BJ (cell line): ENCODE measurements at regions of chr7 and their contacts with region 1.

Region 1: GRCh38 chr7:2687338-2688318 is at the start of gene AMZ1:
- DNase-seq: peak; percentile 51
- H3K4me3 ChIP-seq: peak within 1 kb of the TSS; percentile 38
- H3K27me3 ChIP-seq: no peaks in the 10 kb centered on the region
- CTCF ChIP-seq: no peak
- polyA plus RNA-seq, gene AMZ1: 2.9 and 3.7 TPM in 2 replicates

Region 2: GRCh38 chr7:2820508-2820934 is 132.9 kb after region 1 on chr7:
- CTCF ChIA-PET with region 1: no interaction called
- POLR2A ChIA-PET with region 1: interaction called, 26 read pairs
- DNase-seq: peak; percentile 77
- H3K4me3 ChIP-seq: no peak overlapping the region
- H3K27me3 ChIP-seq: no peaks in the 10 kb centered on the region
- CTCF ChIP-seq: no peak